ENCODE measurements at regions of chr11 and their contacts with region 1.

Region 1: GRCh38 chr11:119205574-119206510 is at the start of gene CBL:
- DNase-seq: no peak
- H3K4me3 ChIP-seq: peak within 1 kb of the TSS; percentile 91
- CTCF ChIP-seq: peak; percentile 92

Region 2: GRCh38 chr11:118918128-118918685 is 287.6 kb before region 1 on chr11:
- CTCF ChIA-PET with region 1: no interaction called
- POLR2A ChIA-PET with region 1: no interaction called
- DNase-seq: no peak
- H3K4me3 ChIP-seq: peak overlapping the region; percentile 50
- CTCF ChIP-seq: no peak

Region 3: GRCh38 chr11:119084663-119085436 is 121.0 kb before region 1 on chr11 and contains the start of gene HMBS:
- CTCF ChIA-PET with region 1: no interaction called
- POLR2A ChIA-PET with region 1: no interaction called
- DNase-seq: no peak
- H3K4me3 ChIP-seq: peak within 1 kb of the TSS; percentile 94
- CTCF ChIP-seq: no peak

Region 4: GRCh38 chr11:119144825-119145486 is 60.9 kb before region 1 on chr11:
- CTCF ChIA-PET with region 1: interaction called, 14 read pairs
- POLR2A ChIA-PET with region 1: no interaction called
- DNase-seq: no peak
- H3K4me3 ChIP-seq: no peak overlapping the region
- CTCF ChIP-seq: peak; percentile 66

Region 5: DNA sequence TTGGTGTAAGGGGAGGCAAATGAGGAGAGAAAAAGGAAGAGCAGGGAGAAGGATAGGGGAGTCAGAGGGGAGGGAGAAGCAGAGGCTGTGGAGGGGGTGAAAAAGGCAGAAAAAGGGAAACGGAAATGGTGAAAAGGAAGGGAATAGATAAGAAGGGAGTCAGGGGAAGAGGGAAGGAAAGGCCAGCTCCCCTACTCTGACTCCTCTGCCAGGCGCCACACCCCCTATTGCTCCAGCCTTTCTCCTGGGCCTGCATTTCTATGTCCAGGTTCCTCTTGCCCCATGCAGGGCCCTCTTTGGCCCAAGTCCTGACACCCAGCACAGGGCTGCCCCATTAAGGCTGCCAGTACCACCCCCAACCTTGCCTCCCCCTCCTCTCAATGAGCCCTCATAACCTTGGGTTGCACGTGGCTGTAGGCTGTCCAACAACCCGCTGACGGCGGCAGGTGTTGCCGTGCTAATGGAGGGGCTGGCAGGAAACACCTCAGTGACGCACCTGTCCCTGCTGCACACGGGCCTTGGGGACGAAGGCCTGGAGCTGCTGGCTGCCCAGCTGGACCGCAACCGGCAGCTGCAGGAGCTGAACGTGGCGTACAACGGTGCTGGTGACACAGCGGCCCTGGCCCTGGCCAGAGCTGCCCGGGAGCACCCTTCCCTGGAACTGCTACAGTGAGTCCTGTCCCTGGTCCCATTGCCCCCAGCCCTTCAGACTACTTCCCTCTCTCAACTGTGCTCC is 24.0 kb before region 1 on chr11:
- CTCF ChIA-PET with region 1: interaction called, 77 read pairs
- POLR2A ChIA-PET with region 1: no interaction called
- DNase-seq: no peak
- H3K4me3 ChIP-seq: no peak overlapping the region
- CTCF ChIP-seq: no peak

Region 6: GRCh38 chr11:119262668-119263351 is 57.0 kb after region 1 on chr11:
- CTCF ChIA-PET with region 1: interaction called, 24 read pairs
- POLR2A ChIA-PET with region 1: no interaction called
- DNase-seq: no peak
- H3K4me3 ChIP-seq: no peak overlapping the region
- CTCF ChIP-seq: no peak

Region 7: GRCh38 chr11:119295178-119295577 is 89.3 kb after region 1 on chr11:
- CTCF ChIA-PET with region 1: interaction called, 15 read pairs
- POLR2A ChIA-PET with region 1: no interaction called
- DNase-seq: no peak
- H3K4me3 ChIP-seq: no peak overlapping the region
- CTCF ChIP-seq: no peak

Region 8: GRCh38 chr11:119315131-119316015 is 109.5 kb after region 1 on chr11:
- CTCF ChIA-PET with region 1: interaction called, 66 read pairs
- POLR2A ChIA-PET with region 1: interaction called, 3 read pairs
- DNase-seq: no peak
- H3K4me3 ChIP-seq: peak overlapping the region; percentile 73
- CTCF ChIP-seq: peak; percentile 30

Region 9: GRCh38 chr11:119373921-119374631 is 168.2 kb after region 1 on chr11:
- CTCF ChIA-PET with region 1: interaction called, 14 read pairs
- POLR2A ChIA-PET with region 1: no interaction called
- DNase-seq: peak; percentile 12
- H3K4me3 ChIP-seq: no peak overlapping the region
- CTCF ChIP-seq: peak; percentile 96

Region 10: GRCh38 chr11:119673759-119674336 is 468.0 kb after region 1 on chr11:
- CTCF ChIA-PET with region 1: no interaction called
- POLR2A ChIA-PET with region 1: no interaction called
- DNase-seq: no peak
- H3K4me3 ChIP-seq: no peak overlapping the region
- CTCF ChIP-seq: no peak

Region 11: DNA sequence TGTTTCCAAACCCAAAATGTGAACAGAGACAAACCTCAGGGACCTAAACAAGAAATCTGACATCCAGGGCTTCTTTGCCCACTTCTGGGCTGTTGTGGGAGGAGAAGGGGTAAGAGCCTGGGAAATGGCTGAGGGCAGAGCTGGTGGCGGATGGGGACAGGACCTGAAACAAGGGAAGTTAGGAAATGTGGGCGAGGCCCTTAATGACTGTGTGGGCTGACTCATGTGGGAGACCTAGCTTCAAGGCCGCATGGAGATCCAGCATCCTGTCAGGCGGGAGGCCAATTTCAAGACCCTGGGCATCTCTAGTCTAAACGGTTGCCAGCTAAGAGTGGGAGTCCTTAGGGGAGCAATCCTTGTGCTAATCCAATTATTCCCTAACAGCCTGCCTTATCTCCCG is 1002.9 kb after region 1 on chr11:
- CTCF ChIA-PET with region 1: no interaction called
- POLR2A ChIA-PET with region 1: no interaction called
- DNase-seq: no peak
- H3K4me3 ChIP-seq: no peak overlapping the region
- CTCF ChIP-seq: no peak

Measured in AG04449 (cell line).